ENCODE measurements at regions of chr17 and their contacts with region 1.

Region 1: DNA sequence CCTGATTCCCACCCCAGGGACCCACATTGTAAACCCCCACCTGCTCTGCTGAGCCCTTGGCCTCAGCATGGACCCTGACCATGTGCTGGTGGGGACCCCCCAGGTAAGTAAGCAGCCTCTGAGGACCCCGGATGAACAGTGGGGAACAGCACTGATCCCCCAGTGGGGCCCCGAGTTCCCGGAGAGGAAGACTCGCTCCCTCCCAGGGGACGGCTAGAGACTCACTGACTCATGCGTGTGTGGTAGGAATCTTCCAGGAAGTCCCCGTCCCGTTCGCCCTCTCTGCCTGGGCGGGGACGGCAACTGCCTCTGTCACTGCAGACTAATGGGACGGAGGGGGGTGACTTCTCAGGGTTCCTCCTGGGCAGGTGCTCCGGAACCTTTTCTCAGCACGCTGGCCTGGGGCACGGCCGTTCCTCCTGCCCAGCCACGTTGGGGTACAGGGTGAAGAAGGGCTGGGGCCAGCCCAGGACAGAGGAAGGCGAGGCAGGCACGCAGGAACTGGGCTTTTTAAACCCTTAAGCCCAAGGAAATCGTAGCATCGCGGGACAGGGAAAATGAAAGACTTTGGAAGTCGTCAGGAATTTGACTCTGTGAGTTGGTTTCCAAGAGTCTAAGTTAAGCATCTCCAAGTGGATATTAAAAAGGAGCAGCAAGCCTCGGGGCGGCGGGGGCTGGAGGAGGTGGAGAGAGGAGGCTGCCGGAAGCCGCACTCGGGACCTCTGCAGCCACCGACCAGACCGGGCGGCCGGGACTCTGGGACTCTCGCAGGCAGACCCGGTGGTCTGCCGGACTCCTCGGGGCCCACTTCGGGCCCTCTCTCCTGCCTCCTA is 178.7 kb downstream of the SEC14L1 start:
- DNase-seq: peak; percentile 94 to 95
- H3K4me3 ChIP-seq: peak overlapping the region; percentile 58
- H3K27ac ChIP-seq: peak overlapping the region; percentile 90 to 92
- H3K4me1 ChIP-seq: peaks cover 18 to 75% (median 60%) of the 10 kb centered on the region in 4 donors
- H3K27me3 ChIP-seq: no peaks in the 10 kb centered on the region
- CTCF ChIP-seq: no peak

Region 2: GRCh38 chr17:77131904-77132303 is 187.5 kb before region 1 on chr17:
- intact Hi-C with region 1: loop called (anchors 10 kb)
- DNase-seq: no peak
- H3K4me3 ChIP-seq: no peak overlapping the region
- H3K27ac ChIP-seq: no peak overlapping the region
- H3K4me1 ChIP-seq: peaks cover 0 to 34% (median 8%) of the 10 kb centered on the region in 4 donors
- H3K27me3 ChIP-seq: no peaks in the 10 kb centered on the region
- CTCF ChIP-seq: no peak

Measured in tibial artery (tissue), 4 donors.